B cell (primary cell): ENCODE measurements at regions of chr7 and their contacts with region 1.

Region 1: DNA sequence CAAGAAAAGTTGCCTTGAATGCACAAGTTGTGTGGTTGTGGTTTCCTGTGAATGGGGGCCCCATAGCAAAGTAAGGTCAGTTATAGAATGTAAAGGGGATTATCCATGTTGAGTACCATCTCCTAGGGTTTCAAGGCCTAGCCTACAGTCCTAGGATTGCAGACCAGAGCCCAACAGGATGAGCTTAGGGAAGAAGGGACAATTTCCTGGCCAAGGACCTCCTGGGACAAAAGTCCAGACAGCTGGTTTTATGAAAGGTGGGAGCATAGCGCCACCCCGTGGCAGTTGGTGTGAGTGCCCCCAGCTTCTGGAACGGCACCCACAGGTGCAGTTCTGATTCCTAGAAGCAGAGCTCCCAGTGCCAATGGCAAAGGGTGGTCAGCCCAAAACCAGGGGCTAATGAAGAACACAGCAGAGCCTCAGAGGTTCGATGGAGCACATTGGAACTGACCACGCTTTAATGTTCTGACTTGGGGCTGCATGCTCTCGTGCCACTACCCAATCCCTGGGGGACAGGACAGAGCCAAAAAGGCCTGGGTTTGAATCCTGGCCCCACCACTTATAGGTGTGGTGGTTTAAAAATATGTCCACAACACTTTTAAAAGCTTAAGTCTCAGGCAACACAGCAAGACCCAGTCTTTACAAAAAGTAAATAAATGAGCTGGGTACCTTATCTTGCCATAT is 25.8 kb upstream of the TMEM120A start:
- DNase-seq: peak; percentile 72
- ATAC-seq: peak; percentile 54
- H3K4me3 ChIP-seq: no peak overlapping the region
- H3K4me3 Mint-ChIP-seq: no peak overlapping the region
- H3K27ac ChIP-seq: no peak overlapping the region
- H3K27ac Mint-ChIP-seq: no peak overlapping the region
- H3K4me1 ChIP-seq: peaks cover 3 to 6% of the 10 kb centered on the region in 2 donors
- H3K4me1 Mint-ChIP-seq: peaks cover 12% of the 10 kb centered on the region
- H3K27me3 ChIP-seq: no peaks in the 10 kb centered on the region
- H3K27me3 Mint-ChIP-seq: no peaks in the 10 kb centered on the region
- CTCF ChIP-seq: peak; percentile 76

Region 2: GRCh38 chr7:75866489-75867389 is 153.4 kb before region 1 on chr7:
- CTCF ChIA-PET with region 1: interaction called, 83 read pairs
- POLR2A ChIA-PET with region 1: no interaction called
- intact Hi-C with region 1: no loop called
- DNase-seq: peak; percentile 56
- ATAC-seq: peak; percentile 58
- H3K4me3 ChIP-seq: no peak overlapping the region
- H3K4me3 Mint-ChIP-seq: no peak overlapping the region
- H3K27ac ChIP-seq: no peak overlapping the region
- H3K27ac Mint-ChIP-seq: no peak overlapping the region
- H3K4me1 ChIP-seq: no peaks in the 10 kb centered on the region
- H3K4me1 Mint-ChIP-seq: no peaks in the 10 kb centered on the region
- H3K27me3 ChIP-seq: peaks cover 0 to 10% (median 0%) of the 10 kb centered on the region in 4 experiments
- H3K27me3 Mint-ChIP-seq: peaks cover 22% of the 10 kb centered on the region
- CTCF ChIP-seq: peak; percentile 70

Region 3: DNA sequence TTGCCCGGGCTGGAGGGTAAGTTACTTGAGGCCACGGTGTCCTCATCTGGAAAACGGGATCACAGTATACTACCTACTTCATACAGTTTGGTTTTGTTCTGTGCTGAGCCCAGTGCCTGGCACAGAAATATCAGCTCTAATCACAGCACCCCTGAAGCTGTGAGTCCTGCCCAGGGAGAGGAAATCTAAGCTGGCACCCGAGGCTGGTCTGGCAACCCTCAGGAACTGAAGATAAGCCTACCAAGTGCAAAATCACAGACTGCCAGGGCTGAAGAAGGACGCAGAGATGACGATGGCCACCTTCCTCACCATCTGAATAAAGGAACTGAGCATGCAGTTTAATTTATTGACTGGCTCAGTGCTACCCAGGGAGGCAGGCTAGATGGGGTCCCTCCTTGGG is 18.0 kb before region 1 on chr7:
- CTCF ChIA-PET with region 1: interaction called, 10 read pairs
- POLR2A ChIA-PET with region 1: no interaction called
- intact Hi-C with region 1: no loop called
- DNase-seq: no peak
- ATAC-seq: no peak
- H3K4me3 ChIP-seq: no peak overlapping the region
- H3K4me3 Mint-ChIP-seq: no peak overlapping the region
- H3K27ac ChIP-seq: no peak overlapping the region
- H3K27ac Mint-ChIP-seq: no peak overlapping the region
- H3K4me1 ChIP-seq: no peaks in the 10 kb centered on the region
- H3K4me1 Mint-ChIP-seq: peaks cover 5% of the 10 kb centered on the region
- H3K27me3 ChIP-seq: no peaks in the 10 kb centered on the region
- H3K27me3 Mint-ChIP-seq: no peaks in the 10 kb centered on the region
- CTCF ChIP-seq: no peak

Region 4: DNA sequence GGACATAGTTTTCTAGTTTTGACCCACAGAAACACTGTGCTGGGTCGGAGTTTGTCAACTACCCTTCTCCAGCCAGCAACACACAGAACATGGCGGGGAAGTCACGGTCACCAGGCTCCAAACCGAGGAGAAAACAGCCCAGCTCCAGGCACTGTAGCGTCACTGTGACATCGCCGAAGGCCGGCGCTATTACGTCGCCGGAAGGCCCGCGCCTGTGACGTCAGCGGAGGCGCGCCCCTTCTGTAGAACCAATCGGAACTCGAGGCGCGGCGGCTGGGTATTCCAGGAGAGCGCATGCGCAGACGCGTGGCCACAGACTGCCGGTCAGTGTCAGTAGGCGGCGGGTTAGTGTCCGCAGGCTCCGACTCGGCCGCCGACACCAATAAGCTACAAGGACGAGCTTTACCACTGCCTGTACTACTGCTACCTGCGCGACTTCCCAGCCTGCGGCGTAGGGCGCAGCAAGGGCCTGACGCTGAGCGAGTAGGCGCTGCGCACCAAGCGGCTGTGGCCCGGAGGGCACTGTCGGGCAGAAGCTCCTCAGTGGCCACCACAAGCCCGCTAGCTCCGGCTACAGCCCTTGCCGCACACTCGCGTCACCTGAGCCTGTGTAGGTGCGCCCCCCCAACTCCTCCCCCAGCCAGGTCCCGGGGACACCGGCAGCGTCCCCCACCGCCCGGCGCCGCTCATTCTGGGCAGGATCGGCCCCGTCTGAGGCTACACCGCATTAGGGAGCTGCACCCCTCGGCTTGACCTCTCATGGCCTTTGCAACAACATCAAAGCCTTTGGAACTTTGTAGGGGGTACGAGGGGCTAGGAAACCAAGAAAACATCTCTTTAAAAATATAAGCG is 146.5 kb after region 1 on chr7:
- CTCF ChIA-PET with region 1: no interaction called
- POLR2A ChIA-PET with region 1: no interaction called
- intact Hi-C with region 1: no loop called
- DNase-seq: peak; percentile 95
- ATAC-seq: peak; percentile 84
- H3K4me3 ChIP-seq: peak overlapping the region in 4 of 5 experiments; percentile 64 to 85 (median 82)
- H3K4me3 Mint-ChIP-seq: peak overlapping the region; percentile 89
- H3K27ac ChIP-seq: peak overlapping the region; percentile 75 to 81
- H3K27ac Mint-ChIP-seq: peak overlapping the region; percentile 71
- H3K4me1 ChIP-seq: peaks cover 0 to 10% of the 10 kb centered on the region in 2 donors
- H3K4me1 Mint-ChIP-seq: peaks cover 4% of the 10 kb centered on the region
- H3K27me3 ChIP-seq: no peaks in the 10 kb centered on the region
- H3K27me3 Mint-ChIP-seq: no peaks in the 10 kb centered on the region
- CTCF ChIP-seq: no peak